Right cardiac atrium (tissue), 5 donors: ENCODE measurements at regions of chr2 and their contacts with region 1.

Region 1: GRCh38 chr2:201231781-201232466 is 28.4 kb upstream of the CASP8 start:
- DNase-seq: peak; percentile 86 to 92 (median 90)
- ATAC-seq: peak; percentile 86 to 87
- H3K4me3 ChIP-seq: no peak overlapping the region
- H3K27ac ChIP-seq: no peak overlapping the region
- H3K4me1 ChIP-seq: no peaks in the 10 kb centered on the region
- H3K27me3 ChIP-seq: no peaks in the 10 kb centered on the region

Region 2: DNA sequence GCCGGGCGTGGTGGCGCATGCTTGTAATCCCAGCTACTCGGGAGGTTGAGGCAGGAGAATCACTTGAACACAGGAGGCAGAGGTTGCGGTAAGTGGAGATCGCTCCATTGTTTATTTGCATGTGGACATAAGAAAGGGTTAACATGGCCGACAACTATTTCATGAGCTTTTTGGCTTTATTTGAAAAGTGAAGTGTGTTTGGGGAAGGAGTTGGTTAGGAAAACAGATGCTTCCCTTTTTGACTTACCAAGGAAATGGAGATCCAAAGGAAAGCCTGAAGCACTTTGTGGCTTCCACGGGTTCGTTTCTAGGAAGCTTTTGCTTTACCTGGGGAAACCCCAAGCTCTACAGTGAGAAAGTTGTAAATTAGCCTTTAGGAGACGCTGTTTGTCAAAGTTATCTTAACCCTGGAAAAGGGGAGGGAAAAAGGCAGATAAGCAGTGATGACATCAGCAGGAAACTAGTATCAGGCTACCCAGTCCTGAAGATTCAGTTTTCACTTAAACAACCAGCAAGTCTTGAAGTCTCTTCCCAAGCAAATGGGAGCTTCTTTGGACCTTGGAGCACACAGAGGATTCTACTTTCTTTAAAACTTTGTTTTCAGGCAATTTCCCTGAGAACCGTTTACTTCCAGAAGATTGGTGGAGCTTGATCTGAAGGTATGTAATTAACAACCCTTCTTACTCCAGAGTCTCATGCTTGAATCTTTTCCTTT is 49.1 kb before region 1 on chr2 and contains the start of gene CASP10:
- intact Hi-C with region 1: loop called in 2 of 4 experiments (anchors 5 to 10 kb)
- DNase-seq: no peak
- ATAC-seq: peak; percentile 78 to 83
- H3K4me3 ChIP-seq: peak within 1 kb of the TSS; percentile 73
- H3K27ac ChIP-seq: peak within 1 kb of the TSS; percentile 15
- H3K4me1 ChIP-seq: peaks cover 4% of the 10 kb centered on the region
- H3K27me3 ChIP-seq: no peaks in the 10 kb centered on the region
- total RNA-seq, gene CASP10: 5.3 to 6.8 (median 5.8) TPM

Region 3: DNA sequence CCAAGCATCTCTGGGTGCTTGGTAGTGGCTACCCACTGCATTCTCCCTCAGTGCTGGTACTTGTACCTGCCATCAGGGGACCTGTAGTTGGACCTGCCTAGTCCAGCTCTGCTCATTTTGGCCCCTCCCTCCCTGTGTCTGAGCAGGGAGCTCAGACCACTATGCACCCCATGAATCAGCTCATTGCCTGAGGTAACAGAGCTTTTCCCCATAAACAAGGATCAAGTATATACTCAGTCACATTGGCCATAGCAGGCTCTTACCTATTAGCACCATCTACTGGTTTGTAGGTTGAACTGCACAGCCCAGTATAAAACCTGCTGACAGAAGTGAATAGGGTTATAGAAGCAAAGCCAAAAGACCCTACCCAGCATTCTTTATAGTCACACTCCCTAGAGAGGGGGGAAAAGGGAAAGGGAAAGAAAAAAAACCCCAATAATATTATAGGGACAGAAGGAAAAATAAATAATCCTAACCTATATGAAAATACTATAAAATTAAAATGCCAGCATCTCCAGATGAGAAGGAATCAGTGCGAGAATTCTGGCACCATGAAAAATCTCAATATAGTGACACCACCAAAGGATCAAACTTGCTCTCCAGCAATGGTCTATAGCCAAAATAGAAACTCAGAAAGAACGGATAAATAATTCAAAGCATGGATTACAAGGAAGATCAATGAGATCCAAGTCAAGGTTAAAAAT is 132.1 kb after region 1 on chr2:
- intact Hi-C with region 1: loop called in 3 of 4 experiments (anchors 10 kb)
- DNase-seq: no peak
- ATAC-seq: peak; percentile 69 to 72
- H3K4me3 ChIP-seq: no peak overlapping the region
- H3K27ac ChIP-seq: no peak overlapping the region
- H3K4me1 ChIP-seq: no peaks in the 10 kb centered on the region
- H3K27me3 ChIP-seq: no peaks in the 10 kb centered on the region

Region 4: DNA sequence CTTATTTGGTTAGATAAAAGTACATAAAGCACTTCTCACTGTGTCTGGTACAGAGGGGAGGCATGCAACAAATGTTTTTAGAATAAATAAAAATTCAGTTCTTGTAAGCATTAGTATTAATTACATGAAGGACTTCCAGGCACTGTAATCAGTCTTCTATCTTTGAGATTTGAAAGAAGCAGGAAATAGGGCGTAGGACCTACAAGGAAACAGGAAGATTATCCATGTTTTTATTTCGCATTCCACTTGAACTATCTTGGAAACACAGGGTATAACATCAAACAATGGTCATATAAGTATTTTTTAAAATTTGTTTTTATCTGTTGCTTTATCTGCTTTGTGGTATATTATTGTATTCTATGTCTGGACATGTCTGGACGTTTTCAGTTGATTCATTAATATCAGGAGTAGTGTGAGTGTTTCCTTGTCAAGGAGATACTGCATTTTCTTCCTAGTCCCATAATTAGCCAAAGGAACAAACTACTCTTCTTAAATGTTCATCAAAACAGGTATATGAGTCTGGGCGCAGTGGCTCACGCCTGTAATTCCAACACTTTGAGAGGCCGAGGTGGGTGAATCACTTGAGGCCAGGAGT is 1176.7 kb after region 1 on chr2:
- intact Hi-C with region 1: no loop called
- DNase-seq: no peak
- ATAC-seq: peak; percentile 38 to 77
- H3K4me3 ChIP-seq: no peak overlapping the region
- H3K27ac ChIP-seq: no peak overlapping the region
- H3K4me1 ChIP-seq: peaks cover 2% of the 10 kb centered on the region
- H3K27me3 ChIP-seq: no peaks in the 10 kb centered on the region